ENCODE measurements at regions of chr5 and their contacts with region 1.

Region 1: DNA sequence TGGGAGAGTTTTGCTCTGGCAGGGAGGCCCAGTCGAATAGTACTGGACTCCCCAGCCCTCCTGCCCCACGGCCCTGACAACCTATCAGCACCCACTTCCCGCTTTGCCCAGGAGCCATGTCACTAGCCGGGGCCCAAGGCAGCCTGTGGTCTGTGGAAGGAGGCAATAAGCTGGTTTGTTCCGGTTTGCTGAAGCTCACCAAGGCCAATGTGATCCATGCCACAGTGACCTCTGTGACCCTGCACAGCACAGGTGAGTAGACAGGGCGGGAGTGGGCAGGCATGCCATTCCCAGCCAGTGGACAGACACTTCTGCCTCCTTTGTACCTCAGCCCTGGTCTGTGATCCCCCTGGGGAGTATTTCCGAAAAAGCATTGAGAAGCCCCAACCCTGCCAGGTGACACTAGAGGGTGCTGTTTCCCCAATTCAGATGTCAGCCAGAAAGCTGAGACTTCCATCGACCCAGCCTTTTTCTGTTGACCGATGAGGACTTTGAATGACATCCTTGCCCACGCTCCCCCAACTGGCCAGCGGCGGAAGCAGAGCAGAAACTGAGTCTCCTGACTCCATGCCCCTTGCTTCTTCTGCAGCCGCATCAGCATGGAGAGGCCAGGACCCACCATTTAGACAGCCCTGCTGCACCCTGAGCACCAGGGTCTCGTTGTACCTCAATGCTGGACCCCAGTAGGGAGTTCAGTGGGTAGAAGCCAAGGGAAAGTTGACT is 9.6 kb downstream of the PCYOX1L start:
- DNase-seq: peak; percentile 70
- ATAC-seq: peak; percentile 72
- H3K4me3 Mint-ChIP-seq: no peak overlapping the region
- H3K27ac Mint-ChIP-seq: peak overlapping the region; percentile 40
- H3K4me1 Mint-ChIP-seq: peaks cover 11% of the 10 kb centered on the region
- H3K27me3 Mint-ChIP-seq: no peaks in the 10 kb centered on the region

Region 2: GRCh38 chr5:149094981-149095380 is 272.4 kb before region 1 on chr5:
- CTCF ChIA-PET with region 1: no interaction called
- POLR2A ChIA-PET with region 1: no interaction called
- DNase-seq: no peak
- ATAC-seq: no peak
- H3K4me3 Mint-ChIP-seq: no peak overlapping the region
- H3K27ac Mint-ChIP-seq: no peak overlapping the region
- H3K4me1 Mint-ChIP-seq: peaks cover 2% of the 10 kb centered on the region
- H3K27me3 Mint-ChIP-seq: peaks cover 2% of the 10 kb centered on the region

Region 3: DNA sequence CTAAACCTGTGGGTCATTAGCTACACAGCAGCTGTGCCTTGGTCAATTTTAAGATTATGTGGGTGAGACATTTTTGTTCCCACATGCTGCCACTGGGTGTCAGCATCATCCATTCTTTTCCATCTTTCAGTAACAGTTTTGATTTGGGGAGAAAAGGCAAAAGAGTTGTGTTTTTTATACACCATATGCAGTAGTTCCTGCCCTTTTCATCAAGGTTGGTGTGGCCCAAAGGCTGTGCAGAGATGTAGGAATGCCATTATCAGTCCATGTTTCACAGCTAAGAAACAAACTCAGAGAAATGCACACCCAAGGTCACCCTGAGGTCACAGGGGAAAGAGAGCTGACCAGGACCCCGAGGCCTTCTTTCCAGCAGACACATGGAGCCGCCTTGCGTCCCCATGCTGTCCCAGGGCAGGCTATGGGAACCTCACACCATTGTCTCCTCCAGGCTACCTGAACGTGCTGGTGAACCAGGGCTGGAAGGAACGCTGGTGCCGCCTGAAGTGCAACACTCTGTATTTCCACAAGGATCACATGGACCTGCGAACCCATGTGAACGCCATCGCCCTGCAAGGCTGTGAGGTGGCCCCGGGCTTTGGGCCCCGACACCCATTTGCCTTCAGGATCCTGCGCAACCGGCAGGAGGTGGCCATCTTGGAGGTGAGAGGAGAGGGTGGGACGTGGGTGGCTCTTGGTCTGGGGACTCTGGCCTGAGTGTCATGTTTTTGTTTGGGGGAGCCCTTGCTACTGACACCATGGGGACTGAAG is 49.9 kb before region 1 on chr5:
- CTCF ChIA-PET with region 1: interaction called, 94 read pairs
- POLR2A ChIA-PET with region 1: no interaction called
- DNase-seq: peak; percentile 48
- ATAC-seq: peak; percentile 55
- H3K4me3 Mint-ChIP-seq: no peak overlapping the region
- H3K27ac Mint-ChIP-seq: no peak overlapping the region
- H3K4me1 Mint-ChIP-seq: no peaks in the 10 kb centered on the region
- H3K27me3 Mint-ChIP-seq: no peaks in the 10 kb centered on the region

Region 4: GRCh38 chr5:149345147-149345875 is 22.1 kb before region 1 on chr5 and contains the start of gene GRPEL2:
- CTCF ChIA-PET with region 1: interaction called, 81 read pairs
- POLR2A ChIA-PET with region 1: interaction called, 15 read pairs
- DNase-seq: peak; percentile 95
- ATAC-seq: peak; percentile 84
- H3K4me3 Mint-ChIP-seq: peak within 1 kb of the TSS; percentile 83
- H3K27ac Mint-ChIP-seq: peak within 1 kb of the TSS; percentile 88
- H3K4me1 Mint-ChIP-seq: peaks cover 58% of the 10 kb centered on the region
- H3K27me3 Mint-ChIP-seq: no peaks in the 10 kb centered on the region
- total RNA-seq, gene GRPEL2: 29.9 to 30.0 TPM

Region 5: GRCh38 chr5:149381987-149382340 is 14.6 kb after region 1 on chr5:
- CTCF ChIA-PET with region 1: interaction called, 15 read pairs
- POLR2A ChIA-PET with region 1: interaction called, 3 read pairs
- DNase-seq: peak; percentile 78
- ATAC-seq: peak; percentile 85
- H3K4me3 Mint-ChIP-seq: no peak overlapping the region
- H3K27ac Mint-ChIP-seq: no peak overlapping the region
- H3K4me1 Mint-ChIP-seq: no peaks in the 10 kb centered on the region
- H3K27me3 Mint-ChIP-seq: peaks cover 2% of the 10 kb centered on the region

Region 6: GRCh38 chr5:149434162-149435014 is 67.0 kb after region 1 on chr5:
- CTCF ChIA-PET with region 1: interaction called, 38 read pairs
- POLR2A ChIA-PET with region 1: no interaction called
- DNase-seq: peak; percentile 63
- ATAC-seq: peak; percentile 62
- H3K4me3 Mint-ChIP-seq: no peak overlapping the region
- H3K27ac Mint-ChIP-seq: no peak overlapping the region
- H3K4me1 Mint-ChIP-seq: peaks cover 28% of the 10 kb centered on the region
- H3K27me3 Mint-ChIP-seq: no peaks in the 10 kb centered on the region

Region 7: GRCh38 chr5:149561848-149562247 is 194.4 kb after region 1 on chr5:
- CTCF ChIA-PET with region 1: interaction called, 15 read pairs
- POLR2A ChIA-PET with region 1: no interaction called
- DNase-seq: no peak
- ATAC-seq: no peak
- H3K4me3 Mint-ChIP-seq: no peak overlapping the region
- H3K27ac Mint-ChIP-seq: no peak overlapping the region
- H3K4me1 Mint-ChIP-seq: peaks cover 11% of the 10 kb centered on the region
- H3K27me3 Mint-ChIP-seq: no peaks in the 10 kb centered on the region